Activated CD4-positive, alpha-beta memory T cell treated with anti-CD3 and anti-CD28 coated beads for 36 hours (primary cell): ENCODE measurements at regions of chr1 and their contacts with region 1.

Region 1: GRCh38 chr1:207429963-207430362 is 24.2 kb upstream of the CR2 start:
- DNase-seq: no peak
- H3K4me3 Mint-ChIP-seq: no peak overlapping the region
- H3K27ac Mint-ChIP-seq: no peak overlapping the region
- H3K4me1 Mint-ChIP-seq: no peaks in the 10 kb centered on the region
- H3K27me3 Mint-ChIP-seq: peaks cover 21% of the 10 kb centered on the region

Region 2: GRCh38 chr1:207414606-207415108 is 15.3 kb before region 1 on chr1:
- CTCF ChIA-PET with region 1: no interaction called
- POLR2A ChIA-PET with region 1: no interaction called
- intact Hi-C with region 1: no loop called
- DNase-seq: peak; percentile 63
- H3K4me3 Mint-ChIP-seq: no peak overlapping the region
- H3K27ac Mint-ChIP-seq: no peak overlapping the region
- H3K4me1 Mint-ChIP-seq: peaks cover 25% of the 10 kb centered on the region
- H3K27me3 Mint-ChIP-seq: peaks cover 3% of the 10 kb centered on the region

Region 3: DNA sequence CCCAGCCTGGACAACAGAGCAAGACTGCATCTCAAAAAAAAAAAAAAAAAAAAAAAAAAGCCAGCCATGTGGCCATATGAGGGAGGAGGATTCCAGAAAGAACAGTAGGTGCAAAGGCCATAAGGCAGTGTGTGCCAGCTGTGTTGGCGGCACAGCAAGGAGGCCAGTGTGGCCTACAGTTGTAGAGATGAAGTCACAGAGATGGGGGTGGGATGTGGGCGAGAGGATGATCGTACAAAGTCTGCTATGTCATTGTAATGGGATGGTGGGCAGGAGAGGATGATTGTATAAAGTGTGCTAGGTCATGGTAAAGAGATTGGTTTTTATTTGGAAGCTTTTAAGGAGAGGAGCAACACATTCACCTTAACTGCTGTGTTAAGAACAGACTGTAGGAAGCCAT is 56.2 kb after region 1 on chr1:
- CTCF ChIA-PET with region 1: no interaction called
- POLR2A ChIA-PET with region 1: no interaction called
- intact Hi-C with region 1: loop called (anchors 2 kb)
- DNase-seq: no peak
- H3K4me3 Mint-ChIP-seq: no peak overlapping the region
- H3K27ac Mint-ChIP-seq: no peak overlapping the region
- H3K4me1 Mint-ChIP-seq: no peaks in the 10 kb centered on the region
- H3K27me3 Mint-ChIP-seq: peaks cover 6% of the 10 kb centered on the region